Activated T-helper 1 cell treated with anti-CD3 and anti-CD28 coated beads, Interleukin-12 subunit alpha, Interleukin-12 subunit beta, Interleukin-2, Interleukin-4 antibody, amounts not matched to agents 30 ng/mL and 10 ng/mL and 1 ng/mL, durations not matched to agents 14 hours and 24 hours and 36 hours (primary cell): ENCODE measurements at regions of chr3 and their contacts with region 1.

Region 1: DNA sequence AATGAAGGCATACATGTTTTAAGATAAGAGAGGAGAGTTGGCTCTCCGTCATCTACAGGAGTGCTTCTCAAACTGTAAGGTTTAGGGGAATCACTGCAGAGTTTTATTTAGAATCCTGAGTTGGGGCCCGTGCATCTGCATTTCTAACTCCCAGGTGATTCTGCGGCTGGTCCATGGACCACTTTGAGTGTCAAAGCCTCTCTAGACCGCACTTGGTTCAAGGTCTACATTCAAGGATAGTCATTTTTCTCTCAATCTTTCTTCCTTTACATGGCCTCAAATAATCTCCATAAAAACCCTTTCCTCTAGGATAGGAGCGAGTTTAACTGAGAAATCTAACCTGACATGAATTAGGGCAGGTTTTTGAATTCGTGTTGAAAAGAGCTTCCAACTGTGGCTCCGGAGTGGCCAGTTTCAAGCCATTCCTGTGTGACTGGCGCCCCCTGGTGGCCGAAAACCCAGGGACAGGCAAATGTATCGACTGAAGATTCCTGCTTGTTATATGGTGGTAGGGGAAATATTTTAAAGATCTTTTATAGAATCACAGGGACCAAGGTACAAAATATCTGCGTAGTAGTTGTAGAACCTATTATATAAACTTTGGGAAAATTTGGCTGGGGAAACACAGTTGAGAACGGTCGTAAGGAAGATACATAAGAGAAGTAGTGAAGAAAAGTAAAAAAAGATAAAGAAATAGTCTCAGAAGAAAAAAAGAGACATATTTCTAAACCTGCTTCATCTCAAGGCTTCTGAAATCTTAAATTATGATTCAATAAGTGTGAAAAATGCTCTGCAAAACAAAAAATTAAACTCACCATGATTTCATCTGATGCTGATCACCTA is 11.9 kb downstream of the GABRR3 start:
- DNase-seq: peak; percentile 80
- H3K4me3 Mint-ChIP-seq: no peak overlapping the region
- H3K27ac Mint-ChIP-seq: no peak overlapping the region
- H3K4me1 Mint-ChIP-seq: peaks cover 24% of the 10 kb centered on the region
- H3K27me3 Mint-ChIP-seq: no peaks in the 10 kb centered on the region

Region 2: GRCh38 chr3:97719156-97719821 is 303.9 kb before region 1 on chr3:
- intact Hi-C with region 1: loop called (anchors 2 kb)
- DNase-seq: peak; percentile 39
- H3K4me3 Mint-ChIP-seq: no peak overlapping the region
- H3K27ac Mint-ChIP-seq: no peak overlapping the region
- H3K4me1 Mint-ChIP-seq: no peaks in the 10 kb centered on the region
- H3K27me3 Mint-ChIP-seq: peaks cover 14% of the 10 kb centered on the region

Region 3: GRCh38 chr3:97793420-97794019 is 229.7 kb before region 1 on chr3:
- intact Hi-C with region 1: loop called (anchors 1 kb)
- DNase-seq: peak; percentile 6
- H3K4me3 Mint-ChIP-seq: no peak overlapping the region
- H3K27ac Mint-ChIP-seq: no peak overlapping the region
- H3K4me1 Mint-ChIP-seq: no peaks in the 10 kb centered on the region
- H3K27me3 Mint-ChIP-seq: no peaks in the 10 kb centered on the region

Region 4: DNA sequence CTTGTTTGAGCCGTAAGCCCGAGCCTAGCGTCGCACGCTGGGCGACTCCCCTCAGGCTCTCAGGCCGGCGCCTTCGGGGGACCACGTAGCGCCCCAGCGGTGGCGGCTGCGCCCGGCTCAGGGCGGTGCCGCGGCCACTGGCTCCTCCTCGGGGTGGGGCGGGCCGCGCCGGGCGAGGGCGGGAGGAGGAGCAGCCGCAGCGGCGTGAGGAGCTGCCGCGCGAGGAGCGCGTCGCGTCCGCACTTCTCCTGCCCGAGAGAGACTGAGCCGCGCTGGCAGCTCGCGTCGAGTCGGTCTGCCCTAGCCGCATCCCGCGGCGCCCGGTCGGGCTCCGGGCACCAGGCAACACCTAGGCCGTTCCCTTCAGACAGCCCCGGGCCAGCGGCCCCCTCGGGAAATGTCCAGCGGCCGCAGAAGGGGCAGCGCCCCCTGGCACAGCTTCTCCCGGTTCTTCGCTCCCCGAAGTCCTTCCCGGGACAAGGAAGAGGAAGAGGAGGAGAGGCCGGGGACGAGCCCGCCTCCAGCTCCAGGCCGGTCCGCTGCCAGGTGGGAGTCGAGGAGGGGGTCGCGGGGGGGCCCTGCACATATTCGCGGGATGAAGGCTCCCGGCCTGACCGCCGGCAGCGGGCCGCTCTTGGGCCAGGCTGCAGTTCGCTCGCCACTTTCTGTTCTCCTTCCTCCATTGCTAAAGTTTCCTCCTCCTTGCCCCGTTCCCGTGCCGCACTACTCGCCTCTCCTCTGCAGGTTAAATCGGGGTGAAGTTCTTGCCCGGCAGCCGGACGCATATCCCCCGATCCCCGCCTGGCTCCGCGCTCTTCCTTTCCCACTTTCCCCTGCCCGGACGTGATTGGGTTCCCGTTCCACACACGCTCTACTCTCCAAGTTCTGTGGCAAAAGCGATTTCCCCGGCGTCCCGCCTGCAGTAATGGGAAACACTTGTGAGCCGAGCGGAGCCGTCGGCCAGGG is 201.1 kb before region 1 on chr3 and contains the start of gene CRYBG3:
- intact Hi-C with region 1: loop called (anchors 1 kb)
- DNase-seq: peak; percentile 86
- H3K4me3 Mint-ChIP-seq: peak within 1 kb of the TSS; percentile 99
- H3K27ac Mint-ChIP-seq: peak within 1 kb of the TSS; percentile 92
- H3K4me1 Mint-ChIP-seq: peaks cover 40% of the 10 kb centered on the region
- H3K27me3 Mint-ChIP-seq: peaks cover 34% of the 10 kb centered on the region
- total RNA-seq, gene CRYBG3: 6.5 and 6.8 TPM in 2 replicates

Region 5: DNA sequence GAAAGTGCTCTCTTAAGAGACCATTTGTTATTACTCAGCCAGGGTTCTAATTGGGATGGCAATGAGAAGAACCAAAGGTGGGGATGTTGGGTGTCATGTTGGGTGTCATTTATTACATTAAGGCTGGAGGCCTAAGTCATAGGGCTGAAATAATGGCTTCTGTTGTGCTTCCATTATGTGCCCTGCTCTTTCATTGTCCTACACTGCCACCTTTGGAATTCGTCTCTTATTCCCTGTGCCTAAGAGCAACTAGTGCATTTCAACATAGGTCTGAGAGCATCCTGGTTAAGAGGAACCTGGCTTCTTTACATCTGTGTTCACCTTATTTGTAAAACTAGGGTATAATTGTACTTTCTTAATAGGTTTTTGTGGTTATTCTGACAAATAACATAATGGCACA is 83.2 kb before region 1 on chr3:
- intact Hi-C with region 1: loop called (anchors 2 kb)
- DNase-seq: no peak
- H3K4me3 Mint-ChIP-seq: no peak overlapping the region
- H3K27ac Mint-ChIP-seq: no peak overlapping the region
- H3K4me1 Mint-ChIP-seq: peaks cover 23% of the 10 kb centered on the region
- H3K27me3 Mint-ChIP-seq: no peaks in the 10 kb centered on the region